MCF 10A (cell line): ENCODE measurements at regions of chr5 and their contacts with region 1.

Region 1: DNA sequence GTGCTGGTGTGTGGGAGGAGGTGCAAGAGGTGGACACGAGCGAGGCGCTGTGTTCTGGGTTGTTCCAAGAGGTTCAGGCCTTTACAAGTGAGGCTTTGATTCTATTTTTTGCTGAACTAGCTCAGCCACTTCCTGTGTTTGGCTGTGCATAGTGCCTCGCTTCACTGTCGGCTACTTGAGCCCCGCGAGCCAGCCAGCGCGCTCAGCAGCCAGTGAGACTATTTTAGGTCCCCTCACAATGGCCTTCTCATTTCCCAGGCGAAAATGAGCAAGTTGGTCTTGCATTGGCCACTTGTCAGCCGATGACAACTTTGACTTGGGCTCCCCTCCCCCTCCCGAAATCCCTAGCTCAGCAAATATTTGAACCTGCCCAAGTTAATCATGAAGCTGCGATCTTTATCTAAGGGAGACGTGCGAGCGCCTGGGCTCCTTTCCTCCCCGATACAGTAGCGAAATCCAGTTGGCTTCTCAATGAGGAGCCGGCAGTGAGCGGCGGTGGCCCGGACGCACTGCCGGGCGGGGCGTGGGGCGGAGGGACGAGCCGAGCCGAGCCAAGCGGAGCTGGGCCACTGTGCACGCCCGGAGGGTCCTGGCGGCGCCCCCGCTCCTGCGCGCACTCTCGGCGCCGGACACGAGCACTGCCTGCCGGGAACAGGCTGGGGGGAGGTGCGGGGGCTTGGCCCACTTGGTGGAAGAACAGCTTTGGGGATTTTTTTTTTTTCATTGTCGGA is 72.6 kb downstream of the PIK3R1 start:
- DNase-seq: peak; percentile 41
- H3K4me3 Mint-ChIP-seq: peak overlapping the region; percentile 69
- H3K27ac Mint-ChIP-seq: peak overlapping the region; percentile 73
- H3K4me1 Mint-ChIP-seq: peaks cover 43% of the 10 kb centered on the region
- H3K27me3 Mint-ChIP-seq: no peaks in the 10 kb centered on the region
- CTCF ChIP-seq: no peak

Region 2: GRCh38 chr5:68331192-68332079 is 43.3 kb after region 1 on chr5:
- CTCF ChIA-PET with region 1: interaction called, 14 read pairs
- POLR2A ChIA-PET with region 1: no interaction called
- intact Hi-C with region 1: loop called (anchors 2 kb)
- DNase-seq: no peak
- H3K4me3 Mint-ChIP-seq: no peak overlapping the region
- H3K27ac Mint-ChIP-seq: no peak overlapping the region
- H3K4me1 Mint-ChIP-seq: peaks cover 31% of the 10 kb centered on the region
- H3K27me3 Mint-ChIP-seq: no peaks in the 10 kb centered on the region
- CTCF ChIP-seq: no peak

Region 3: DNA sequence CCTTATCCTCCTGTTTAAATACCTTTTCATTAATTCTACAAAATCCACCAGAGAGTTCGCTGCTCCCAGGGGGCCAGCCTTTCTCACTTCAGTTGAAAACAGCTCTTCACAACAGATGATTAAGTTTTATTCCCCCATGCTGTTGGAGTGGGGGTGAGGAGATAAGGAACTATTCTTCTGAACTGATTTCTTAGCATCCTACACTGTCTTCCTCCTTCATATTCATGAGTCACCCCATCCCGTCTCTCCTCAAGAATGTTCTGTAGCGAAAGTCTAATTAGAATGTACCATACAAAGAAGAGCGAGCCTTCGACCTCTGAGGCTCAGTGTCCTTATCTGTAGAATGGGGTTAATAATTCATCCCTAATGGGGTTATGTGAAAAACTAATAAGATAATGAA is 65.5 kb after region 1 on chr5:
- CTCF ChIA-PET with region 1: no interaction called
- POLR2A ChIA-PET with region 1: no interaction called
- intact Hi-C with region 1: no loop called
- DNase-seq: no peak
- H3K4me3 Mint-ChIP-seq: no peak overlapping the region
- H3K27ac Mint-ChIP-seq: no peak overlapping the region
- H3K4me1 Mint-ChIP-seq: no peaks in the 10 kb centered on the region
- H3K27me3 Mint-ChIP-seq: no peaks in the 10 kb centered on the region
- CTCF ChIP-seq: no peak

Region 4: DNA sequence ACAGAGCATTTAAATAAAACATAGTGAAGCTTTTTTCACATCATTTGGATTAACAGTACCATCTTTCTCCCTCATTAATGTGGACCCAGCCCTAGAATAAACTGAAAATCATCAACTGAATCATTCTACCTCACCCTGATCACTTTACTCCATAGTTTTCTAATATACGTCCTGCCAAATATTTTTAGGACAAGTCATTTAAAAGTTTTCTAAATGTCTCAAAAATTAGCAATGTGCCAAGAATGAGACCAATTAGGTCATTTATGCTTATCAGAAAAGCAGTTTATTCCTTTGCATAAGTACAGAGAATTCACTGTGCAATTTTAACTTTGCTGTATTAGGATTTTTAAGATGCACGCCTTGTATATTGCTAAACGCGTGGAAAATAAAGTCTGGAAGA is 211.8 kb after region 1 on chr5:
- CTCF ChIA-PET with region 1: no interaction called
- POLR2A ChIA-PET with region 1: no interaction called
- intact Hi-C with region 1: no loop called
- DNase-seq: no peak
- H3K4me3 Mint-ChIP-seq: no peak overlapping the region
- H3K27ac Mint-ChIP-seq: no peak overlapping the region
- H3K4me1 Mint-ChIP-seq: no peaks in the 10 kb centered on the region
- H3K27me3 Mint-ChIP-seq: no peaks in the 10 kb centered on the region
- CTCF ChIP-seq: no peak

Region 5: GRCh38 chr5:68515514-68515913 is 227.4 kb after region 1 on chr5:
- CTCF ChIA-PET with region 1: no interaction called
- POLR2A ChIA-PET with region 1: no interaction called
- intact Hi-C with region 1: no loop called
- DNase-seq: no peak
- H3K4me3 Mint-ChIP-seq: no peak overlapping the region
- H3K27ac Mint-ChIP-seq: no peak overlapping the region
- H3K4me1 Mint-ChIP-seq: no peaks in the 10 kb centered on the region
- H3K27me3 Mint-ChIP-seq: no peaks in the 10 kb centered on the region
- CTCF ChIP-seq: no peak

Region 6: GRCh38 chr5:68657048-68657961 is 369.2 kb after region 1 on chr5:
- CTCF ChIA-PET with region 1: interaction called, 3 read pairs
- POLR2A ChIA-PET with region 1: no interaction called
- intact Hi-C with region 1: loop called (anchors 5 kb)
- DNase-seq: peak; percentile 32
- H3K4me3 Mint-ChIP-seq: no peak overlapping the region
- H3K27ac Mint-ChIP-seq: no peak overlapping the region
- H3K4me1 Mint-ChIP-seq: peaks cover 26% of the 10 kb centered on the region
- H3K27me3 Mint-ChIP-seq: no peaks in the 10 kb centered on the region
- CTCF ChIP-seq: no peak

Region 7: GRCh38 chr5:68745448-68745847 is 457.3 kb after region 1 on chr5:
- CTCF ChIA-PET with region 1: no interaction called
- POLR2A ChIA-PET with region 1: no interaction called
- intact Hi-C with region 1: loop called (anchors 5 kb)
- DNase-seq: peak; percentile 34
- H3K4me3 Mint-ChIP-seq: no peak overlapping the region
- H3K27ac Mint-ChIP-seq: no peak overlapping the region
- H3K4me1 Mint-ChIP-seq: peaks cover 6% of the 10 kb centered on the region
- H3K27me3 Mint-ChIP-seq: peaks cover 22% of the 10 kb centered on the region
- CTCF ChIP-seq: peak; percentile 13

Region 8: GRCh38 chr5:68898951-68899471 is 610.9 kb after region 1 on chr5:
- CTCF ChIA-PET with region 1: no interaction called
- POLR2A ChIA-PET with region 1: no interaction called
- intact Hi-C with region 1: no loop called
- DNase-seq: peak; percentile 66
- H3K4me3 Mint-ChIP-seq: no peak overlapping the region
- H3K27ac Mint-ChIP-seq: no peak overlapping the region
- H3K4me1 Mint-ChIP-seq: peaks cover 18% of the 10 kb centered on the region
- H3K27me3 Mint-ChIP-seq: no peaks in the 10 kb centered on the region
- CTCF ChIP-seq: no peak

Region 9: GRCh38 chr5:69007726-69008368 is 719.7 kb after region 1 on chr5:
- CTCF ChIA-PET with region 1: interaction called, 4 read pairs
- POLR2A ChIA-PET with region 1: no interaction called
- intact Hi-C with region 1: loop called (anchors 5 kb)
- DNase-seq: peak; percentile 75
- H3K4me3 Mint-ChIP-seq: no peak overlapping the region
- H3K27ac Mint-ChIP-seq: no peak overlapping the region
- H3K4me1 Mint-ChIP-seq: no peaks in the 10 kb centered on the region
- H3K27me3 Mint-ChIP-seq: peaks cover 30% of the 10 kb centered on the region
- CTCF ChIP-seq: peak; percentile 80